ENCODE measurements at regions of chr2 and their contacts with region 1.

Region 1: GRCh38 chr2:147843864-147844696 is 749 bp upstream of the ACVR2A start:
- DNase-seq: peak; percentile 90
- H3K4me3 ChIP-seq: peak overlapping the region; percentile 48 to 79
- H3K27ac ChIP-seq: peak overlapping the region; percentile 91 to 99
- H3K4me1 ChIP-seq: no peaks in the 10 kb centered on the region
- H3K27me3 ChIP-seq: no peaks in the 10 kb centered on the region
- CTCF ChIP-seq: peak in 2 of 4 experiments; percentile 24 to 51
- POLR2A ChIP-seq: peak; percentile 29

Region 2: GRCh38 chr2:147082850-147083522 is 761.1 kb before region 1 on chr2:
- intact Hi-C with region 1: loop called (anchors 5 kb)
- DNase-seq: peak; percentile 45
- H3K4me3 ChIP-seq: no peak overlapping the region
- H3K27ac ChIP-seq: no peak overlapping the region
- H3K4me1 ChIP-seq: no peaks in the 10 kb centered on the region
- H3K27me3 ChIP-seq: no peaks in the 10 kb centered on the region
- CTCF ChIP-seq: peak; percentile 63 to 83 (median 76)
- POLR2A ChIP-seq: no peak

Region 3: GRCh38 chr2:147980940-147981528 is 137.0 kb after region 1 on chr2:
- intact Hi-C with region 1: no loop called
- DNase-seq: no peak
- H3K4me3 ChIP-seq: no peak overlapping the region
- H3K27ac ChIP-seq: no peak overlapping the region
- H3K4me1 ChIP-seq: no peaks in the 10 kb centered on the region
- H3K27me3 ChIP-seq: no peaks in the 10 kb centered on the region
- CTCF ChIP-seq: no peak
- POLR2A ChIP-seq: no peak